ENCODE measurements at regions of chr13 and their contacts with region 1.

Region 1: GRCh38 chr13:109786457-109787134 is at the start of gene IRS2:
- DNase-seq: peak; percentile 93 to 97 (median 96)
- H3K4me3 ChIP-seq: peak within 1 kb of the TSS; percentile 36 to 62
- H3K4me3 Mint-ChIP-seq: peak within 1 kb of the TSS; percentile 81 to 88 (median 86)
- H3K27ac ChIP-seq: peak within 1 kb of the TSS; percentile 37
- H3K27ac Mint-ChIP-seq: peak within 1 kb of the TSS; percentile 72 to 97 (median 89)
- H3K4me1 ChIP-seq: peaks cover 21% of the 10 kb centered on the region
- H3K4me1 Mint-ChIP-seq: peaks cover 11 to 29% (median 19%) of the 10 kb centered on the region in 4 donors
- H3K27me3 ChIP-seq: no peaks in the 10 kb centered on the region
- H3K27me3 Mint-ChIP-seq: peaks cover 3% of the 10 kb centered on the region in 2 donors
- total RNA-seq, gene IRS2: 20.9 to 21.4 TPM

Region 2: DNA sequence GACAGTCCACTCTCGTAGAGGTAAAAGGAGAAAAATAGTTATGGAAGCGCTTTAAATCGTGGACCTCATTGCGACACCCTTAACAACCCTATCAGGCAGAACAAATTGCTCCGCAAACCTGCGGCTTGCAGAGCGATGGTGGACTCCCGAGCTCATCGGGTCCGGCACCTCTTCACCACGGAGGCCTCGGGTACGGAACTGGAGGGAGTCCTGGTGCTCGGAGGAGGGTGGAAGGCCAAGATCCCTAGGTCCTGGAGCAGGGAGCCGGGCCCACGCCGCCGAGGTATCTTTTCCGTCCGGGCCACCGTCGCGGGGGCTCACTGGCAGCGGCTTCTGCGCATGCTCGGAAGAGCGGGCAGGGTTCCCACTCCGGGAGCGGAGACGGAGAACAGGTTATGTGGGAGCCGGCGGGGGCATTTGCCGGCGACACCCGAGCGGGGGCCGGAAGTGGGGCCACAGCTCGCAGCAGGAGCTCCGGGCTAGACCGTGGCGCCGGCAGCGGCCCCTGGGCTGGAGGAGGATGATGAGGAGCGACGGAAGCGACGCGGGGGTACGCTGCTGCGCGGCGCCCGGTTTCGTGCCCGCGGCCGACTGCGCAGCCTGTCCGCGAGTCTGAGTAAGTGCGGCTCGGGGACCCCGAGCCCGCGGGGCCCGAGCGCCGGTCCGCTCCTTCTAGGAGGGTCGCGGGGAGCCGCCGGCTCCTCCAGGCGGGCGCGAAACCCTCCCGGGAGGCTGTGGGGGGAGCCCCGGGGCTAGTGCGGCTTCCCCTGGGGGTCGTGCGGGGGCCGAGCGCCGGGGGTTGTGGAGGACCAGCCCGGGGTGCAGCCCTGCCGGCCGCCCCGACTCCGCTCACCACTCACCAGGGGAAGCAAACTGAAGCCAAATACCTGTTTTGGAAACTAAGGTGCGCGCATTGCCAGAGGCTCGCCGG is 1568.3 kb before region 1 on chr13 and contains the start of gene ABHD13:
- CTCF ChIA-PET with region 1: no interaction called
- POLR2A ChIA-PET with region 1: interaction called, 3 read pairs
- intact Hi-C with region 1: loop called (anchors 2 kb)
- DNase-seq: peak; percentile 91 to 96 (median 92)
- H3K4me3 ChIP-seq: peak within 1 kb of the TSS; percentile 68 to 94
- H3K4me3 Mint-ChIP-seq: peak within 1 kb of the TSS; percentile 94 to 99 (median 96)
- H3K27ac ChIP-seq: peak within 1 kb of the TSS; percentile 86
- H3K27ac Mint-ChIP-seq: peak within 1 kb of the TSS; percentile 95 to 99 (median 96)
- H3K4me1 ChIP-seq: peaks cover 69% of the 10 kb centered on the region
- H3K4me1 Mint-ChIP-seq: peaks cover 34 to 76% (median 50%) of the 10 kb centered on the region in 4 donors
- H3K27me3 ChIP-seq: no peaks in the 10 kb centered on the region
- H3K27me3 Mint-ChIP-seq: no peaks in the 10 kb centered on the region
- total RNA-seq, gene ABHD13: 22.9 to 23.2 TPM

Region 3: DNA sequence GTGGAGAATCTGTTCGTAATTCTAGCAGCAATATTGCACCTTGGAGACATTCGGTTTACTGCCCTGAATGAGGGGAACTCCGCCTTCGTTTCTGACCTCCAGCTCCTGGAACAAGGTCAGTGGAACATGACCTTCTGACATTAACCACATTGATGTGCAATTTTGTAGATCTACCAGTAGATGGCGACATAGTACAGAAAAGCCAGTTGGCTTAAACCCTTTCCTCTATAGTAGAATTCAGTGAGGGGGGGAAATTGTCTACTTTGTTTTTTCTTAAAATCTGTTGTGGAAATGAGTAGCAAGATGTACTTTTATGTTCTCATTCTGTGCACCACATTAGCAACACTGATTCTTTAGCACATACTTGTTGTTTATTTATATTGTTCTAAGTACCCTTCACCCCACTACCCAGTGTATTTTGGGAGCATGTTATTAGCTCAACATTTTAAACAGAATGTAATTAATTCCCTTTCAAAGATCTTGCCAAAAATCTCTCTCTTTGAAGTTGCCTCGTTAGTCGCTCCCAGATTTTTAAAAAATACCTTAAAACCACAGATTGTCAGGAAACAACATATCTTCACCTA is 825.0 kb before region 1 on chr13:
- CTCF ChIA-PET with region 1: interaction called, 19 read pairs
- POLR2A ChIA-PET with region 1: no interaction called
- intact Hi-C with region 1: loop called (anchors 1 kb)
- DNase-seq: peak; percentile 29 to 57 (median 55)
- H3K4me3 ChIP-seq: no peak overlapping the region
- H3K4me3 Mint-ChIP-seq: no peak overlapping the region
- H3K27ac ChIP-seq: no peak overlapping the region
- H3K27ac Mint-ChIP-seq: peak overlapping the region in 1 of 7 donors; percentile 24
- H3K4me1 ChIP-seq: no peaks in the 10 kb centered on the region
- H3K4me1 Mint-ChIP-seq: peaks cover 0 to 2% (median 0%) of the 10 kb centered on the region in 4 donors
- H3K27me3 ChIP-seq: no peaks in the 10 kb centered on the region
- H3K27me3 Mint-ChIP-seq: peaks cover 1 to 2% of the 10 kb centered on the region in 2 donors

Region 4: GRCh38 chr13:109422161-109422560 is 364.4 kb before region 1 on chr13:
- CTCF ChIA-PET with region 1: no interaction called
- POLR2A ChIA-PET with region 1: no interaction called
- intact Hi-C with region 1: loop called (anchors 10 kb)
- DNase-seq: no peak
- H3K4me3 ChIP-seq: no peak overlapping the region
- H3K4me3 Mint-ChIP-seq: no peak overlapping the region
- H3K27ac ChIP-seq: no peak overlapping the region
- H3K27ac Mint-ChIP-seq: no peak overlapping the region
- H3K4me1 ChIP-seq: no peaks in the 10 kb centered on the region
- H3K4me1 Mint-ChIP-seq: no peaks in the 10 kb centered on the region
- H3K27me3 ChIP-seq: no peaks in the 10 kb centered on the region
- H3K27me3 Mint-ChIP-seq: peaks cover 4 to 5% of the 10 kb centered on the region in 2 donors

Region 5: GRCh38 chr13:110715395-110716235 is 929.0 kb after region 1 on chr13:
- CTCF ChIA-PET with region 1: no interaction called
- POLR2A ChIA-PET with region 1: no interaction called
- intact Hi-C with region 1: loop called (anchors 2 kb)
- DNase-seq: peak; percentile 97 to 100 (median 99)
- H3K4me3 ChIP-seq: peak overlapping the region; percentile 91 to 98
- H3K4me3 Mint-ChIP-seq: peak overlapping the region; percentile 96 to 100 (median 98)
- H3K27ac ChIP-seq: peak overlapping the region; percentile 78
- H3K27ac Mint-ChIP-seq: peak overlapping the region; percentile 98 to 99 (median 99)
- H3K4me1 ChIP-seq: peaks cover 33% of the 10 kb centered on the region
- H3K4me1 Mint-ChIP-seq: peaks cover 18 to 56% (median 33%) of the 10 kb centered on the region in 4 donors
- H3K27me3 ChIP-seq: no peaks in the 10 kb centered on the region
- H3K27me3 Mint-ChIP-seq: peaks cover 0 to 2% of the 10 kb centered on the region in 2 donors

Measured in CD4-positive, alpha-beta memory T cell (primary cell).